Activated B cell treated with CpG ODN at 0.5 μM for 24 hours (primary cell): ENCODE measurements at regions of chr19 and their contacts with region 1.

Region 1: DNA sequence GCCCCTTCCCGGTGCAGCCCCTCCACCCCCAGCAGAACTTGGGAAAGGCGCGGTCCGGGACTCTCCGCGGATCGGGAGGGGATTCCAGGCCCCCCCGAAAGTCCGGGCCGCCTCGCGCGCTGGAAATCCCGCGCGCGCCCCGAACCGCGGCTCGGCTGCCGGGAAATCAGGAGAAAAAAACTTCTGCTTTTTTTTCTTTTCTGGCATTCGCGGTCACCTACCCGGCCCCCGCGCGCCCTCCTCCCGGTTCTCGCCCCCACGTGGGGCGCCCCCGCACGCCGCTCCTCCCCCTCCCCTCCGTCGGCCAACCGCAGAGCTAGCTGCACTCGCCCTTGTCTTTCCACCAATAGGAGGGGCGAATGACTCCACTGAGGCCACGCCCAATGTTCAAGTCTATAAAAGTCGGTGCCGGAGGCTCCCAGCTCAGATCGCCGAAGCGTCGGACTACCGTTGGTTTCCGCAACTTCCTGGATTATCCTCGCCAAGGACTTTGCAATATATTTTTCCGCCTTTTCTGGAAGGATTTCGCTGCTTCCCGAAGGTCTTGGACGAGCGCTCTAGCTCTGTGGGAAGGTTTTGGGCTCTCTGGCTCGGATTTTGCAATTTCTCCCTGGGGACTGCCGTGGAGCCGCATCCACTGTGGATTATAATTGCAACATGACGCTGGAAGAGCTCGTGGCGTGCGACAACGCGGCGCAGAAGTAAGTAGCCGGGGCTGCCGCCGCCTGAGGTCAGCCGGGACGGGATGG is at the start of gene GADD45B:
- DNase-seq: peak; percentile 96
- ATAC-seq: peak; percentile 59
- H3K4me3 Mint-ChIP-seq: peak within 1 kb of the TSS; percentile 99
- H3K27ac Mint-ChIP-seq: peak within 1 kb of the TSS; percentile 93
- H3K4me1 Mint-ChIP-seq: peaks cover 32% of the 10 kb centered on the region
- H3K27me3 Mint-ChIP-seq: no peaks in the 10 kb centered on the region
- CTCF ChIP-seq: no peak
- total RNA-seq, gene GADD45B: 291 and 302 TPM in 2 replicates

Region 2: DNA sequence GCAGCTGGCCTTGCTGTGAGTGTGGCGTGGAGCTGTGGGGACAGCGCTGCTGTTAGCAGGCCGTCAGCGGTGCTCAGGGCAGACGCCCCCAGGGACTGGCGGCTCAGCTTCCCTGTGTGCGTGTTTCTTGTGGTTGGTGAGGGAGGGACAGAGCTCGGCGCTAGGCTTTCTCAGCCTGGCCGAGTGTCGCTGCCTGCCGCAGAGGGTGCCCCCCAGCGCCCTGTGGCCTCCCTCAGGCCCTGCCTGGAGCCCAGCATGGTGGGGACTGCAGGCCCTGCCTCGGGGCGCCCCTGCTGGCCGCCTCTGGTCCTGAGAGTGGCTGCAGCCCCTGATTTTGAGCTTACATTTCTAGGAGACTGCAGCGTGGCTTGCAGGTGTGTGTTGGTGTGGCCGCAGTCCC is 276.7 kb before region 1 on chr19:
- CTCF ChIA-PET with region 1: no interaction called
- POLR2A ChIA-PET with region 1: no interaction called
- intact Hi-C with region 1: no loop called
- DNase-seq: no peak
- ATAC-seq: peak; percentile 52
- H3K4me3 Mint-ChIP-seq: no peak overlapping the region
- H3K27ac Mint-ChIP-seq: no peak overlapping the region
- H3K4me1 Mint-ChIP-seq: peaks cover 8% of the 10 kb centered on the region
- H3K27me3 Mint-ChIP-seq: no peaks in the 10 kb centered on the region
- CTCF ChIP-seq: no peak

Region 3: DNA sequence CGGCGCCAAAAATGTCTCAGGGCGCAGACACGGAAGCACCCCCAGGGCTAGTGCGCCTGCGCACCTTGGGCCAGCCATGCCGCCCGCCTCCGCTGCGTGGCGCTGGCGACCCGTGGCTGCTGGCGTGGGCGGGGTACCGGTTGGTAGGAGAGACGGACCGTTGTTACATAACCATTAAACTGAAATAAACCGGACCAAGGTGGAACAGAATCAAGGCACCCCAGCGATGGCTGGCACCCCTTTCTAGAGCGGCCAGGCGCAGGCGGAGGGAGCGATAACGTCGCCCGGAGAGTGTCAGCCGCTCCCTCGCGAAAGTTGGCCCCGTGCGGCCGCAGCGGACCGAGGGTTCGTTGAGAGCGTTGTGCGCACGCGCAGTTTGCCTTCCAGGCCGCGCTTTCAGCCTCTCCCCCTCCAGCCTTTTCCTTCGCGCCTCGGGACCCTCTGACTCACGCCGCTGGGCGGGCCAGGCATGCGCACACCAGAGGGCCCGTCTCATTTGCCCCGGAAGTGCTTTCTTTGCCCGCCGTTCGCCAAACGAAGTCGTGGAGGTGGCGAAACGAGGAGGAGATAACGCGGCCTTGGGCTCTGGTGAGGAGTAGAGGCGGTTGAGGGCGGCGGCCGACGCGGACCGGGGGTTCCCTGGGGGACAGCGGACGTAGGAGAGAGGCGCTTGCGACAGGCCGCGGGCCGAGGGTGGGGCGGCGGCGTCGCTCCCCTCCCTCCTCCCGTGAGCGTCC is 239.4 kb before region 1 on chr19 and contains the starts of genes PLEKHJ1 and SF3A2:
- CTCF ChIA-PET with region 1: no interaction called
- POLR2A ChIA-PET with region 1: interaction called, 7 read pairs
- intact Hi-C with region 1: loop called (anchors 1 kb)
- DNase-seq: peak; percentile 100
- ATAC-seq: peak; percentile 82
- H3K4me3 Mint-ChIP-seq: peak within 1 kb of the TSS; percentile 99
- H3K27ac Mint-ChIP-seq: peak within 1 kb of the TSS; percentile 99
- H3K4me1 Mint-ChIP-seq: peaks cover 69% of the 10 kb centered on the region
- H3K27me3 Mint-ChIP-seq: no peaks in the 10 kb centered on the region
- CTCF ChIP-seq: no peak
- total RNA-seq, gene PLEKHJ1: 74.4 and 74.9 TPM in 2 replicates
- total RNA-seq, gene SF3A2: 107 and 117 TPM in 2 replicates

Region 4: GRCh38 chr19:2427429-2428320 is 48.2 kb before region 1 on chr19 and contains the start of gene TIMM13:
- CTCF ChIA-PET with region 1: interaction called, 3 read pairs
- POLR2A ChIA-PET with region 1: interaction called, 24 read pairs
- intact Hi-C with region 1: loop called (anchors 1 kb)
- DNase-seq: peak; percentile 99
- ATAC-seq: peak; percentile 94
- H3K4me3 Mint-ChIP-seq: peak within 1 kb of the TSS; percentile 90
- H3K27ac Mint-ChIP-seq: peak within 1 kb of the TSS; percentile 95
- H3K4me1 Mint-ChIP-seq: peaks cover 21% of the 10 kb centered on the region
- H3K27me3 Mint-ChIP-seq: no peaks in the 10 kb centered on the region
- CTCF ChIP-seq: no peak
- total RNA-seq, gene TIMM13: 63.9 and 65.3 TPM in 2 replicates

Region 5: DNA sequence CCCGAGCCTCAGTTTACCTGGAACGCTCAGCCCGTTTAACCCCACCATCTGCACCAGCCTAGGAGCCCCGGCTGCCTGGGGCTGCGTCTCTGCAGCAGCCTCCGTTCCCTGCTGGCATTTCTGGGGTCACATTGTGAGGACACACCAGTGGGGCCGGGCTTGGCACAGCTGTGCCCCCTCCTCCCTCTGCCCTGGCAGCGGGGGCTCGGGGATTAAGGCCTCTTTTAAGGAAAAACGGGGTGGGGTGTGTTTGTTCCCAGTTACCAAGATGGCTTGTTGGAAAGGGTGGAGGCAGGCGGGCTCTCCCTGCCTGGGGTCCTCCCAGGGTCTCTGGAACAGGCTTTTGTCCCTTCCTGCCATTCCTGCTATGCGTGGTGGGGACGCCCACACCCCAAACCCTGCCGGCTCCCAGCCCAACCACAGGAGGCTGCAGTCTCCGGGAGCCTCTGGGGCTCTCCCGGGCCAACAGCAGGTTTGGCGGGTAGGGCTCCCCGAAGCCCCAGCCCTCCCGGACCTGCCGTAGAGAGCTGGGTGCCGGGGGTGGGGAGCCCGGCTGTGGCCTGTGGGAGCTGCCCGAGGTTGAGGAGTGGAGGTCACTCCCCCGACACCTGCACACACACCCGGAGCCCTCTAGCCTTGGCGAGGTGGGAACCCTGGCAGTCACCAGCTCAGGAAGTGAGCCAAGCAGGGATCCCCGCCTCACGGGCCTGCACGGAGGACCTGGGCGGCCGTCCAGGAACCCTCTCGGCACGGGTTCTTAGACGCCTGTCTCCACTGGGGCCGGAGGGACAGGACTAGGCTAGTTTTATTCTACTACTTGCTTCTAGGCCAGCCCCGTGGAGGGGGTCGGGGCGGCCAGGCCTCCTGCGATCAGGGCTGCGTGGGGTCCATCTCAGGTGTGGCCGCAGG is 36.9 kb after region 1 on chr19:
- CTCF ChIA-PET with region 1: no interaction called
- POLR2A ChIA-PET with region 1: interaction called, 14 read pairs
- intact Hi-C with region 1: loop called (anchors 5 kb)
- DNase-seq: no peak
- ATAC-seq: no peak
- H3K4me3 Mint-ChIP-seq: no peak overlapping the region
- H3K27ac Mint-ChIP-seq: no peak overlapping the region
- H3K4me1 Mint-ChIP-seq: peaks cover 22% of the 10 kb centered on the region
- H3K27me3 Mint-ChIP-seq: no peaks in the 10 kb centered on the region
- CTCF ChIP-seq: no peak

Region 6: DNA sequence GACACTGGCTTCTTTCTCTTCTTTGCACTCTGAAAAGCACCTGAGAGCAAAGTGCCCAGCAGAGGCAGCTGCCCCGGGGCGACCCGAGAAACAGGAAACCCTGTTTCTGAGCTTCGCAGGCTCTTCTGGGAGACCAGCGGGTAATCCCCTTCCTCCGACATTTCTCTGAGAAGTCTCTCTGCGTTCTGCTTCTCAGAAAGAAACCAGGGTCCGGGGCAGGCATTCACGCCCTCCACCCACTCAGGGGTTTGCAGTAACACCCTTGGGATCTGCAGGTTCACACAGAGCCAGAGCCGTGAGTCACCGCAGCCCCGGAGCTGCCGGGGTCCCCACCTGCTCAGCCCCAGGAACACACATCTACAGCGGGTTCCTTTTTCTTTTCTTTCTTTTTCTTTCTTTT is 86.0 kb after region 1 on chr19:
- CTCF ChIA-PET with region 1: interaction called, 4 read pairs
- POLR2A ChIA-PET with region 1: interaction called, 141 read pairs
- intact Hi-C with region 1: loop called (anchors 1 kb)
- DNase-seq: peak; percentile 70
- ATAC-seq: peak; percentile 92
- H3K4me3 Mint-ChIP-seq: peak overlapping the region; percentile 87
- H3K27ac Mint-ChIP-seq: peak overlapping the region; percentile 94
- H3K4me1 Mint-ChIP-seq: peaks cover 60% of the 10 kb centered on the region
- H3K27me3 Mint-ChIP-seq: no peaks in the 10 kb centered on the region
- CTCF ChIP-seq: no peak

Region 7: DNA sequence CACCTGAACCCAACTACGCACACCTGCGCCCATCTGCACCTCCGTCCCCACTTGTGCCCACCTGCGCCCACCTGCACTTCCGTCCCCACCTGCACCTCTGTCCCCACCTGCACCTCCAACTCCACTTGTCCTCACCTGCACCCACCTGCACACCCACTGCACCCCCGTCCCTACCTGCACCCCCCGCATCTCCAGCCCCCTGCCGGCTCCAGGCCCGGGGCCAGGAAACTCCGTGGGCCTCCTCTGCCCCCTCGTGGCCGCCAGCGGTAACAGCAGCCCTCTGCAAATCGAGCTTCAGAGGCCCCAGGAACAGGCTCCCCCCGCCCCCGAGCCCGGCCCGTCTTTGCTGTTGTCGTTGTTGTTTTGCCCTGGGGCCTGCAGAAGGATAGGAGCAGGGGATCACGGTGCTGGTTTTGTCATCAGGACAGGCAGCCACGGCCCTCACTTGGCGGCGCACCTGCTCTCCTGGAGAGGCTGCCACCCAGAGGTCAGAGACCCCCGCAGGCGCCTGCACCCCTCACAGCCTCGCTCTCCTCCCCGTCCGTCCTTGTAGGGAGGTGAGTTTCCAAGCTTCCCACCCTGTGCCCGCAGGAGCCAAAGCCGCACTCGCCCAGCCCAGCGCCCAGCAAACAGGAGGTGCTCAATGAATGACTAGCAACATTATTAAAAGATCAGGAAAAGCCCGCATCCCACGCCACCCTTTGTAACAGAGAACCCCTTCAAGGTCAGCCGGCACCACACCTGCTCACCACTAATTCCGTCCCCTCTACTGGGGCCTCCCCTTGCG is 161.2 kb after region 1 on chr19:
- CTCF ChIA-PET with region 1: interaction called, 59 read pairs
- POLR2A ChIA-PET with region 1: interaction called, 165 read pairs
- intact Hi-C with region 1: loop called (anchors 1 kb)
- DNase-seq: peak; percentile 74
- ATAC-seq: peak; percentile 52
- H3K4me3 Mint-ChIP-seq: peak overlapping the region; percentile 53
- H3K27ac Mint-ChIP-seq: peak overlapping the region; percentile 74
- H3K4me1 Mint-ChIP-seq: peaks cover 87% of the 10 kb centered on the region
- H3K27me3 Mint-ChIP-seq: no peaks in the 10 kb centered on the region
- CTCF ChIP-seq: peak; percentile 31